Activated CD4-positive, alpha-beta memory T cell treated with anti-CD3 and anti-CD28 coated beads for 36 hours (primary cell): ENCODE measurements at regions of chr5 and their contacts with region 1.

Region 1: GRCh38 chr5:54719384-54720283 is 202.1 kb downstream of the SNX18 start:
- DNase-seq: peak; percentile 67
- H3K4me3 Mint-ChIP-seq: no peak overlapping the region
- H3K27ac Mint-ChIP-seq: peak overlapping the region; percentile 42
- H3K4me1 Mint-ChIP-seq: peaks cover 34% of the 10 kb centered on the region
- H3K27me3 Mint-ChIP-seq: peaks cover under 1% of the 10 kb centered on the region

Region 2: GRCh38 chr5:53008751-53009150 is 1710.9 kb before region 1 on chr5:
- CTCF ChIA-PET with region 1: no interaction called
- POLR2A ChIA-PET with region 1: no interaction called
- intact Hi-C with region 1: loop called (anchors 5 kb)
- DNase-seq: peak; percentile 73
- H3K4me3 Mint-ChIP-seq: no peak overlapping the region
- H3K27ac Mint-ChIP-seq: peak overlapping the region; percentile 55
- H3K4me1 Mint-ChIP-seq: peaks cover 61% of the 10 kb centered on the region
- H3K27me3 Mint-ChIP-seq: peaks cover 4% of the 10 kb centered on the region

Region 3: DNA sequence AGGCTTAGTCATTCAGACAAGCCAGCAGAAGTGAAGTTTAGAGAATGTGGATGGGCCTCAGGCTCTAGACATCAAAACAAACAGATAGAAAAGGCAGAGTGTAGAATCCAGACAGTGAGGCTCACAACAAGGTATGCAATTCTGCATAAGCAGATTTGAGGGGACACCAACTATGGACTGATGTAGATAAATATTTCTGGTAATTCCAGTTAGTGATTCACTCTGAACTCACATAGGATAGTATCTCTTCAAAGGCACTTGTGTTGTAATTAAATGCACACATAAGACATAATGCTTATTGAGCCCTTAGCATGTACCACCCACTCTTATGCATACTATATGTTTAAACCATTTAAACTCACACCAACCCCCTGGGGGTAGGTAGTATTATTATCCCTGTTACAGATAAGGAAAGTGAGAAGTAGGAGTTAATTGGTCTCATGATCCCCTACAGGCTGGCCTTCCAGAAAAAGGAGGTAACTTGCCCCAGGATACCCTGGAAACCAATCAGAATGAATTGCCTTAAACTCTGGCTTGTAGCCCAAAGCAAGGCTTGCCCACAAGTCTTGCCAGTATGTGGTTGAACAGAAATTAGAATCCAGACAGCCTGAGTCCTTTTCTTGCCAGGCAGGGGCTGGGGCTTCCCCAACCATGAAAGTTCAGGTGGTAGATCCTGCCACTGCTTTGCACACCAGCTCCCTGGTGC is 303.6 kb before region 1 on chr5:
- CTCF ChIA-PET with region 1: no interaction called
- POLR2A ChIA-PET with region 1: no interaction called
- intact Hi-C with region 1: no loop called
- DNase-seq: no peak
- H3K4me3 Mint-ChIP-seq: no peak overlapping the region
- H3K27ac Mint-ChIP-seq: no peak overlapping the region
- H3K4me1 Mint-ChIP-seq: no peaks in the 10 kb centered on the region
- H3K27me3 Mint-ChIP-seq: peaks cover 4% of the 10 kb centered on the region

Region 4: DNA sequence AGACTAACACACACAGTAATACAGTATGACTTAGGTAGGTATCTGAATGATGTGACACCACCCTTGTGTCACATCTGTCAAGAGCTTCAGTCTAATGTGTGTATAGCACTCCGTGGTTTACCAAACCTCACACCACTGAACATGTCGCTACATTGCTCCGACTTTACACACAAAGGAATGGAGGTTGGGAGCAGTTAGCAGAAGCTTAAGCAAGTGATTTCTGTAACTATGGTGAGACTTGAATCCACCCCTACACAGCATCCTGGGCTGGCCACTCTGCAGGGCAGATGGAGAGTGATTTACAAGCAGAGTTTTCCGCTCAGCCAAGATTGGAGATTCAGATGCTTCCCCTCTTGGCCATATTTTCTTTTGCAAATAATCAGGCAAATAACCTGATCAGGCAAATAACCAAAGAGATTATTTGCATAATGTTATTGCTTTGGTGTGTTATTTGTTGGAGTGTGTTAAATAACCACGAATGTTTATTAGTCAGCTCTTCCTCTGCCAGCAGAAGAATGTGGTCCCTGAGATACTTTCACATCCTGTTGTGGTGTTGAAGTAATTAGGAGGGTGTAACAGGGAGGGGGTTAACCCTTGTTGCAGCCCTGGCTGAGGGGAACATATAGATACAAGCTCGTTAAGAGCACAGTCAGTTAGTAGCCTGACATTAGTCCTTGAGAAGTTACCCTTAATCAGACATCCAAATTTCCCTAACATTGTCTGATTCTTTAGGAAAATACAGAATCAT is 109.3 kb before region 1 on chr5:
- CTCF ChIA-PET with region 1: no interaction called
- POLR2A ChIA-PET with region 1: no interaction called
- intact Hi-C with region 1: loop called (anchors 1 kb)
- DNase-seq: peak; percentile 32
- H3K4me3 Mint-ChIP-seq: no peak overlapping the region
- H3K27ac Mint-ChIP-seq: peak overlapping the region; percentile 29
- H3K4me1 Mint-ChIP-seq: peaks cover 21% of the 10 kb centered on the region
- H3K27me3 Mint-ChIP-seq: no peaks in the 10 kb centered on the region

Region 5: GRCh38 chr5:54743997-54744788 is 24.6 kb after region 1 on chr5:
- CTCF ChIA-PET with region 1: interaction called, 4 read pairs
- POLR2A ChIA-PET with region 1: interaction called, 3 read pairs
- intact Hi-C with region 1: loop called (anchors 1 kb)
- DNase-seq: peak; percentile 75
- H3K4me3 Mint-ChIP-seq: peak overlapping the region; percentile 30
- H3K27ac Mint-ChIP-seq: peak overlapping the region; percentile 83
- H3K4me1 Mint-ChIP-seq: peaks cover 23% of the 10 kb centered on the region
- H3K27me3 Mint-ChIP-seq: no peaks in the 10 kb centered on the region

Region 6: GRCh38 chr5:54793468-54794134 is 74.0 kb after region 1 on chr5:
- CTCF ChIA-PET with region 1: no interaction called
- POLR2A ChIA-PET with region 1: no interaction called
- intact Hi-C with region 1: loop called (anchors 2 kb)
- DNase-seq: no peak
- H3K4me3 Mint-ChIP-seq: no peak overlapping the region
- H3K27ac Mint-ChIP-seq: peak overlapping the region; percentile 38
- H3K4me1 Mint-ChIP-seq: peaks cover 18% of the 10 kb centered on the region
- H3K27me3 Mint-ChIP-seq: peaks cover 8% of the 10 kb centered on the region

Region 7: GRCh38 chr5:54883374-54884212 is 164.0 kb after region 1 on chr5:
- CTCF ChIA-PET with region 1: no interaction called
- POLR2A ChIA-PET with region 1: no interaction called
- intact Hi-C with region 1: no loop called
- DNase-seq: no peak
- H3K4me3 Mint-ChIP-seq: peak overlapping the region; percentile 54
- H3K27ac Mint-ChIP-seq: no peak overlapping the region
- H3K4me1 Mint-ChIP-seq: peaks cover 11% of the 10 kb centered on the region
- H3K27me3 Mint-ChIP-seq: peaks cover 63% of the 10 kb centered on the region